Left cardiac atrium (tissue), 4 donors: ENCODE measurements at regions of chr3 and their contacts with region 1.

Region 1: DNA sequence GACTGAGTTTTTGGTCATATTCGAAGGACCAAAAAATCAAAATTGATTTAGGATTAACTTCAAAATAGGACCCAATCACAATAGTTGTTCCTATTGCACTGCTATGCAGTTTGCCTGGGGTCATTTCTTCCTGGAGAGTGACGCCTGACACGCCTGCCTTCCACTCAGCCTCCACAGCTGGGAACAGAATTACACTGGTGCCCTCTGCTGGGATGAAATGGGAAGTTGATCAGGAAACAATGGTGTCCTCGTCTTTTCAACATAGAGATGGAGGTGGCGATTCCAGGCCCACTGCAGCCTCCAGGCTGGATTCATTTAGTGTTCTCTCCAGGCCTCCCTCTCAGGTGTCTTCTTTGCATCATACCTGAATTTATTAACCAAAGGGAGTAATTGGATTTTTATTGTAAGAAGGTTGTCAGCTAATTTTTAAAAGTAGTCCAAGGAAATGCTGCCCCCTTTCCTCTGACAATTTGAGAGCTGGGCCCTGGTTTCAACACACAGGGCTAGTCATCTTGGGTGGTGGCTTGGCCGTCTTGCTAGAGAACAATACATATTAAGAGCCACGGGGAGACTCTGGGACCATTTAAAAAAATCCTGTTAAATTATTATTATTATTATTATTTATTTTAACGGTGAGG is 69.7 kb downstream of the GAP43 start:
- DNase-seq: peak; percentile 73
- ATAC-seq: peak; percentile 96 to 97

Region 2: GRCh38 chr3:115092220-115092791 is 600.7 kb before region 1 on chr3:
- intact Hi-C with region 1: loop called in 1 of 2 experiments (anchors 5 kb)
- DNase-seq: peak; percentile 61
- ATAC-seq: peak; percentile 97 to 99

Region 3: DNA sequence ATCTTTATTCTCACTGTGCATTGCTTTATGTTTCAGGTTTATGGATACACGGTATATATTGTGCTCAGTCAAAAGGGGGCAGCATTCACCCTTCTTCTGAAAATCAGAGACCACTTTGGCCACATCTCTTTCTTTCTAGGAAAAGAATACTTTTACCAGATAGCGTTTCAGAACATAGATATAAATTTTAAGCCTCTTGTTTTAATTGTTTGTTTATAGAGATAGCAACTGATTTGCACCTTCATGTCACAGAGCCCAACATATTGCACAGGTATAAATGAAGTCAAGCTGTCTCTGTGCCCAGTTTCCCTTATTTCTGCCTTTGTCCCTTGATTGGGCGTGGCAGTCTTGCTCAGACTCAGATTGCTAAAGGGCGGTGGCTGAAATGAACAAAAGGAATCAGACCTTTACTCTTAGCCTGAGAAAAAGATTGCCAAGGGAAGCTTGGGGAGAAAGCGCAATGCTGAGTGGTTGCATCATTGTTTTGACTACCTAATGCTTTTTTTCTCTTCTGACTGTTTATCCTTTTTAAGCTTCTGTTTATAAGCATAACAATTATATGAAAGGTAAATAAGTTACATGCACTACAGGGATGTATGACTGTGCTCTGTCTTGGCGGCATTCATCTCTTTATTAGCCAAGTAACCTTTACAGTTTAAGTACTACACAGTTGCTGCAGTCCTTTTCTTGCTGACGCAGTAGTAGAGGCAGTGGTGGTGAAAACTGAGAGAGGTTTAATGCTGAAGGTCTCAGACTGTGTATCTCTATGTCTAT is 475.1 kb before region 1 on chr3:
- intact Hi-C with region 1: loop called (anchors 1 to 5 kb)
- DNase-seq: peak; percentile 32
- ATAC-seq: peak; percentile 79 to 82

Region 4: DNA sequence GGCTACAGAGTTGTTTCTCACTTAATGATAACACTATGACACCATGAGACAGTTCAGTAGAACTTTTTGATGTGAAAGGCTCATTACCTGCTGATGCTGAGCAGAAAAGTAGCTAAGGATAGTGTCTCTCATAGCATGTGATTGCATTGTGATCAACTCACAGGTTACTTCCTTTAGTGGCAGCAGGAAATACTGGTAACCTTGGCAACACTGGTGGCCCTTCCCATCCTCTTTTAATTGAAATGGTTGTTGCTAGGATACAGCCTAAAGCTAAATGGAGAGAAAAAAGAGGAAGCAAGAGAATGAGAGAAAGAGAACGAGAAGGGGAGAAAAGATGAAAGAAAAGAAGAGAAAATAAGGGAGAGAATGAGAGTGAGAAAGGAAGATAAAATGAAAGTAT is 274.4 kb before region 1 on chr3:
- intact Hi-C with region 1: no loop called
- DNase-seq: no peak
- ATAC-seq: no peak

Region 5: DNA sequence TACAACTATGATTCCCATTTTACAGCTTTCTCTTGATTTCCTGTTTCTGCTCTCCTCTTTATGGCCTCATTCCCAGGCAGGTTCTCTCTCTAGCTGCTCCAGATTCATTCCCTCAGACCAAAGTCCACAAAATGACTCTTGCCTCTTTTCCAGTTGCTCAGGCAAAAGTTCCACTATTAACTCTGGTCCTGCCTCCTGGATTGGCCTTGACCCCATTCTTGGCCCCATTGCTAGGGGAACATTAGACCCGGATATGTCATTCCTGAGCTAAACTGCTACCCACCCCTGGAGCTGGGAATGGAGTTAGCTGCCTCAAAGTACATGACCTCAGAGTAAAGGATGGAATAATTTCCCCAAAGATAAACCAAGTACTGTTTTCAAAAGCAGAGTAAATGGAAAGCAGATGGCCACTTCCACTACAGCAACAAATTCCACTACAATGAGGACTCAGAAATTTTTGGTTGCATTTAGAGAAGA is 142.7 kb before region 1 on chr3:
- intact Hi-C with region 1: loop called in 1 of 2 experiments (anchors 10 kb)
- DNase-seq: peak; percentile 29
- ATAC-seq: peak in 1 of 2 donors; percentile 96

Region 6: DNA sequence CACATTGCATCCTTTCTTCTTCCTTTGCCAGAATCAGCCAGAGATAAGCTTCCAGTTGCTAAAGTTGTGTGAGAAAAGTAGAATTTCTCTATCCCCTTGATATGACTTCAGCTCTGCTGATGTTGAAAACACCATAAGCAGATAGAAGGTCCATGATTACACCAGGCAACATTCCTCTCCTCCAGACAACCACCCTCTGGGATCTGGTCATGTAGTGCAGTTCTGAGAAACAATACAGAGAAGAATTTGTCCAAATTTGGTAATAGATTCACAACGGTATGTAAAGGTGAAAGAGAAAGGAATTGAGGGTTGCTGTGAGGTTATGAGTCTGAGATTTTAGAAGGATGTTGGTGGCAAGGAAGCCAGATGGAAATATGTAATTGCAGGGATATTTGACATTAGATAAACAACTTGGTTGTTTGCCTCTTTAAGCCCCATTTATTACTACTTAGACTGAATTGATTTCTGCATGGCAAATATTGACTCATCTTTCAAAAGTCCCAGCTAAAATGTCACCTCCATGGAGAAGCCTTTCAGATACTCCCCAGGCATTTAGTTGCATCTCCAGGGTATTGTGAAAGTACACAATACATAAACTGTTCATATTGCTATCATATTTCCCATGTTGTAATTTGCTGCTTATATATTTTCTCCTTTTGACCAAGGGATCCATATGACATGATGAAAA is 65.2 kb after region 1 on chr3:
- intact Hi-C with region 1: no loop called
- DNase-seq: no peak
- ATAC-seq: no peak

Region 7: DNA sequence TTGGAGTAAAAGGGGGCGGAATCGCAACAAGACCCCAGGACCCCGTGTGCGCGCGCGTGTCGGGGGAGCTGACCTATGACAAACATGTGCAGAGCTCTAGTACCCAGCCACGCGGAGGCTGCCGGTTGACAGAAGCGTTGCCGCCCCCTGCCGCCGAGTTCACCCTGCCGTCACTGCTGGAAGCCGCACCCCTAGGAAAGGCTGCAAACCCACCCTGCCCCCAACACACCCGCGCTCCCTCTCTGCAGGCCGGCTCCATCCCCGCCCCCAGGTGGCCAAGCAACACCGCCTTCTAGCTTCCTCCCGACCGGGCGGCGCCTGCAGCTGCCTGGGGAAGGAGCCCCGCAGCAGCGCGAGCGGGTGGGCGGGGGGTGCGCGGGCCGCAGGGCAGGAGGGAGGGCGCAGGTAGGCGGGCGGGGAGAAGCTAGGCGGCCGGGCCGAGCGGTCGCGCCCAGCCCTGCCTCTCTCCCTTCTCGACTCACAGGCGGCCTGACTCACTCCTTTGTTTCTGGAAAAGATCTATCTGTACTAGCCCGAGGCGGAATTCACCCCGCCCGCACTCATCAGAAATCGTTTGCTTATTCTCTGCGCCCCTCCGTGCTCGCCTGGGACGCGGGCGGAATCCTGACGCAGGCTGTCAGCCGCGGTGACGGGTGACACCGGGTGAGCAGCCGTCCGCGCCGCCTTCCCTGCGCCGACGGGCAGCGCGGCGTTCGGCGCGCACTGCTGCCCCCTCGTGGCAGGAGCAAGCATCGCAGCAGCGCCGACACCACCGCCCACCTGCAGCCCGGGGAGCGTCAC is 91.1 kb after region 1 on chr3:
- intact Hi-C with region 1: loop called in 1 of 2 experiments (anchors 10 kb)
- DNase-seq: peak; percentile 93
- ATAC-seq: peak; percentile 94 to 96

Region 8: DNA sequence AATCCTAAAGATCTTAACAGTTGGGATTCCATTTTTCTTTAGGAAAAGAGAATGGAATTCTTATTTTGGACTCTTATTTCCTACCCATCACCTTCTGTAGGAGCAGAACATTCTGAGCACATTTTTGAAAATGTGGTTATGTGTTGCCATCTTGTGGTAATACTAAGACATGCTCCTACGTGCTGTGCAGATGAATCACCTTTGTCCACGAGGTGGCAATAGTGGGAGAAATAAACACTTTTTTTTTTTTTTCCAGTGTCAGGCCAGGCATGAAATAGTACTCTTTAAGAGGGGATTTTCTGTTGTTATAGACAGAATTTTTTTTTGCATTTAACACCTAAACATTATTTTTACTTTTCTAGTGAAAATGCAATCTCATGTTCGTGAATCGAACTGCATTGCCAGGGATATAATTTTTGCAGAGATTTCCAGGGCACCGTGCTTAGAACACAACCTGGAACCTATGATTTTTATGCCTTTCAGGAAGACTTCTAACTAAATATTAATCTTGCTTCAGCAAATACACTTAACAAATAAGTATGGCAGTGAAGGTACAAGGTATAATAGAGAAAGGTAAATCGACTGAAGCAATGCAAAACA is 126.9 kb after region 1 on chr3:
- intact Hi-C with region 1: loop called in 1 of 2 experiments (anchors 5 kb)
- DNase-seq: peak; percentile 61
- ATAC-seq: peak; percentile 85 to 89